CD4-positive, alpha-beta memory T cell (primary cell): ENCODE measurements at regions of chr2 and their contacts with region 1.

Region 1: GRCh38 chr2:3379647-3380534 is at the start of gene TRAPPC12:
- DNase-seq: peak; percentile 90 to 93 (median 92)
- H3K4me3 ChIP-seq: peak within 1 kb of the TSS; percentile 88 to 90
- H3K4me3 Mint-ChIP-seq: peak within 1 kb of the TSS; percentile 92 to 99 (median 95)
- H3K27ac ChIP-seq: peak within 1 kb of the TSS; percentile 89
- H3K27ac Mint-ChIP-seq: peak within 1 kb of the TSS; percentile 94 to 99 (median 98)
- H3K4me1 ChIP-seq: peaks cover 40% of the 10 kb centered on the region
- H3K4me1 Mint-ChIP-seq: peaks cover 32 to 64% (median 46%) of the 10 kb centered on the region in 4 donors
- H3K27me3 ChIP-seq: no peaks in the 10 kb centered on the region
- H3K27me3 Mint-ChIP-seq: no peaks in the 10 kb centered on the region
- total RNA-seq, gene TRAPPC12: 134 to 137 TPM

Region 2: DNA sequence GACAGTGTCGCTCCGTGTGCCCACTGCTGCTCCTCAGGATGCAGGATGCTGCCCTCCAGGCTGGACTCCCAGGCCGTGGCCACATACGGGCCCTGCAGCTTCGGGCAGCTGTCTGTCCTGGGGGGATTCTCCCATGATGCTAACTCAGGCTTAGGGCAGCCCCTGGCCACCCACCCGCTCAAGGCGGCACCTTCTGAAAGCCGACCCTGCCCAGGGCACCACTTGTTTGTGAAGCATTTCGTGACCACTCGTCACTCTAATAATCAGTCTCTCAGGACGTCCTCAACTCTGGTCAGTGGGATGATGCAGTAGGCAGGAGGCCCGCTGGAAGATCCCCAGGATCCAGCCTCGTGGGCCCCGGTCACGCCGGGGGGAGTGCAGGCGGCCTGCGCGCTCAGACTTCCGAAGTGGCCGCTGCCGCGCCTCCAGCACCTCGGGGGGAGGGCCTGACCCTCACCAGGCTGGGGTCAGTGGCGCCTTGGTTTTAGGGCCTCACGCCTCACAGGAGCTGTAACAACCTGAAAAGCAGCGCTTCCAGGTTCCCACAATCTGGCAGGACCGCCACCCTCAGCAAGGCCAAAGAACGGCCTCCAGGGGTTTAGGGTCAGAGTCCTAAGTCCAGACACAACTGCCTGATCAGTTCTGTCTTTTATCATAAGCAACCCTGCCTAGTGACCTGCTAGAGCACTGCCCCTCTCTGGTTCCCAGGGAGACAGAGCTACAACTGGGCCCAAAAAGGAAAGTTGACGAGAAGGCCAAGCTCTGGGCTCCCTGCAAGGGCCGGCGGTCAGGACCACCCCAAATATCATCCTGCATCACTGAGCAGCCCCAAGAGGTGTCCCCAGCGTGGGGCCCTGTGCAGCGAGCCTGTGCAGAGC is 55.2 kb before region 1 on chr2:
- CTCF ChIA-PET with region 1: no interaction called
- POLR2A ChIA-PET with region 1: no interaction called
- intact Hi-C with region 1: no loop called
- DNase-seq: no peak
- H3K4me3 ChIP-seq: no peak overlapping the region
- H3K4me3 Mint-ChIP-seq: no peak overlapping the region
- H3K27ac ChIP-seq: no peak overlapping the region
- H3K27ac Mint-ChIP-seq: no peak overlapping the region
- H3K4me1 ChIP-seq: no peaks in the 10 kb centered on the region
- H3K4me1 Mint-ChIP-seq: peaks cover 0 to 11% (median 6%) of the 10 kb centered on the region in 4 donors
- H3K27me3 ChIP-seq: no peaks in the 10 kb centered on the region
- H3K27me3 Mint-ChIP-seq: no peaks in the 10 kb centered on the region

Region 3: GRCh38 chr2:3396920-3397559 is 17.1 kb after region 1 on chr2:
- CTCF ChIA-PET with region 1: interaction called, 10 read pairs
- POLR2A ChIA-PET with region 1: interaction called, 4 read pairs
- intact Hi-C with region 1: no loop called
- DNase-seq: no peak
- H3K4me3 ChIP-seq: no peak overlapping the region
- H3K4me3 Mint-ChIP-seq: no peak overlapping the region
- H3K27ac ChIP-seq: no peak overlapping the region
- H3K27ac Mint-ChIP-seq: no peak overlapping the region
- H3K4me1 ChIP-seq: no peaks in the 10 kb centered on the region
- H3K4me1 Mint-ChIP-seq: peaks cover 9 to 40% (median 15%) of the 10 kb centered on the region in 4 donors
- H3K27me3 ChIP-seq: no peaks in the 10 kb centered on the region
- H3K27me3 Mint-ChIP-seq: no peaks in the 10 kb centered on the region

Region 4: GRCh38 chr2:3423492-3424175 is 43.7 kb after region 1 on chr2:
- CTCF ChIA-PET with region 1: interaction called, 22 read pairs
- POLR2A ChIA-PET with region 1: interaction called, 5 read pairs
- intact Hi-C with region 1: no loop called
- DNase-seq: peak; percentile 50 to 63 (median 57)
- H3K4me3 ChIP-seq: no peak overlapping the region
- H3K4me3 Mint-ChIP-seq: no peak overlapping the region
- H3K27ac ChIP-seq: no peak overlapping the region
- H3K27ac Mint-ChIP-seq: peak overlapping the region in 6 of 7 donors; percentile 9 to 90 (median 34)
- H3K4me1 ChIP-seq: no peaks in the 10 kb centered on the region
- H3K4me1 Mint-ChIP-seq: peaks cover 3 to 6% (median 5%) of the 10 kb centered on the region in 4 donors
- H3K27me3 ChIP-seq: no peaks in the 10 kb centered on the region
- H3K27me3 Mint-ChIP-seq: no peaks in the 10 kb centered on the region

Region 5: GRCh38 chr2:3518496-3519254 is 138.8 kb after region 1 on chr2:
- CTCF ChIA-PET with region 1: no interaction called
- POLR2A ChIA-PET with region 1: interaction called, 27 read pairs
- intact Hi-C with region 1: loop called (anchors 1 kb)
- DNase-seq: peak; percentile 97 to 99 (median 98)
- H3K4me3 ChIP-seq: peak overlapping the region; percentile 74 to 88
- H3K4me3 Mint-ChIP-seq: peak overlapping the region; percentile 80 to 97 (median 93)
- H3K27ac ChIP-seq: peak overlapping the region; percentile 92
- H3K27ac Mint-ChIP-seq: peak overlapping the region; percentile 79 to 98 (median 95)
- H3K4me1 ChIP-seq: peaks cover 23% of the 10 kb centered on the region
- H3K4me1 Mint-ChIP-seq: peaks cover 32 to 47% (median 38%) of the 10 kb centered on the region in 4 donors
- H3K27me3 ChIP-seq: no peaks in the 10 kb centered on the region
- H3K27me3 Mint-ChIP-seq: no peaks in the 10 kb centered on the region

Region 6: DNA sequence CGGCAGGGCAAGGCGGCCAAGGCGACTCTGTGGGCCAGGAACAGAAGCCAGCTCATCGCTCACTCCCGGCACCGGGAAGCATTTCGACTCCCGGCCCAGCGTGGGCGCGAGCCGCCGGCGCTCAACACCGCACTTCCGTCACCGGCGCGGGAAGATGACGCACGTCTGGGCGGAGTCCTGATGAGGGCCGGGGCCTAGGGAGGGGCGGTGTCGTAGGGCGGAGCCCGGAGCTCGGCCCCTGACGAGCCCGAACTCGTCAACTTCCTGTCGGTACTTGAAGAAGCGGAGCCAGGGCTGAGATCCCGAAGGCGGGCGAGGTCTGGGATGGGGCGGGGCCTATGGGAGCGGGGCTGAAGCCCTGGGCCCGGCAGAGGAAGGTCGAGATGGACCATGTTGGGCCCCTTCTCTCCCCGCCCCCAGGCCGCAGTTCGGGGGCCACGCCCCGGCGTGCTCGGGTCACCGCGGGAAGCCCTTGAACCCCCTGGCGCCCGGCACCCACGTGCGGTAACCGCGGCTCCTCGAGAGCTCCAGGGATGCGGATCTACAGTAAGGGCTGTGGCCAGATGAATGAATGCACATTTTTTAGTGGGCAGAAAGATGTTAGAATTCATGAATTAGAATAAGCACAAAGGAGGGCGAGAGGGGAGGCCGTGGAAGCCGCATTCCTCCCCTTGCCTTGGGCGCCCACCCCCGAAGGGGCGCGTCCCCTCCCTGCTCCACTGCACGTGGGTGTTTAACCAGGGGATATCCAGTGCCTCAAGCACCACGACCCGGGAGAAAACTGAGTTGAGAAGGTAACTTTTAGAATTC is 178.5 kb after region 1 on chr2 and contains the start of gene RNASEH1:
- CTCF ChIA-PET with region 1: no interaction called
- POLR2A ChIA-PET with region 1: interaction called, 33 read pairs
- intact Hi-C with region 1: loop called (anchors 1 kb)
- DNase-seq: peak; percentile 96 to 98 (median 96)
- H3K4me3 ChIP-seq: peak within 1 kb of the TSS; percentile 18 to 87
- H3K4me3 Mint-ChIP-seq: peak within 1 kb of the TSS; percentile 89 to 95 (median 91)
- H3K27ac ChIP-seq: peak within 1 kb of the TSS; percentile 90
- H3K27ac Mint-ChIP-seq: peak within 1 kb of the TSS; percentile 93 to 98 (median 97)
- H3K4me1 ChIP-seq: peaks cover 25% of the 10 kb centered on the region
- H3K4me1 Mint-ChIP-seq: peaks cover 4 to 34% (median 24%) of the 10 kb centered on the region in 4 donors
- H3K27me3 ChIP-seq: no peaks in the 10 kb centered on the region
- H3K27me3 Mint-ChIP-seq: no peaks in the 10 kb centered on the region
- total RNA-seq, gene RNASEH1: 22.0 to 24.0 TPM

Region 7: DNA sequence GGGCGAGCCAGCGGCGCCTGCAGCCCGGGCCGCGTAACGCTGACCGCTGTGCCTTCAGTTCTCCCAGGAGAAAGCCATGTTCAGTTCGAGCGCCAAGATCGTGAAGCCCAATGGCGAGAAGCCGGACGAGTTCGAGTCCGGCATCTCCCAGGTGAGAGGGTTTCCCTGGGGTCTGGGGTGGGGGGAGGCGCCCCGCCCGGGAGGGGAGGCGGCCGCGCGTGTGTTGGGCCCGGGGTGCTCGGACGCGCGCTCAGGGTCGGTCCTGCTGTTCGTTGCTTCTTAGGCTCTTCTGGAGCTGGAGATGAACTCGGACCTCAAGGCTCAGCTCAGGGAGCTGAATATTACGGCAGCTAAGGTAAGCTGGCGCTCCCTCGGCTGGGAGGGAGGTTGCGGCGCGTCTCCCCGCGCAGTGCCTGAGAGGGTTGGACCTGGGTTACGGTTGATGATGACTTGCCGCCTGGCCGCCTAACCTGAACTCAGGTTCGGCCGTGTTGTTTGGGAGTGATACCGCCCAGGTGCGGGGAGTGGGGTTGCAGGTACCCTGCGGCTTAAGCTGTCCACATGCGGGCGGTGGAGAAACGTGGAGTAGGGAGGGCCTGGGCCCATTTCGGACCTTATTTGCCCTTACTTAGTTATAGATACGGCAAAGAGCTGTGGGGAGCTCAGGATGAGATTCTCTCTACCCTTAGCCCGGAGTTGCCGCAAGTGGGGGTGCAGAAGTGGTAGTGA is 195.8 kb after region 1 on chr2:
- CTCF ChIA-PET with region 1: interaction called, 3 read pairs
- POLR2A ChIA-PET with region 1: interaction called, 9 read pairs
- intact Hi-C with region 1: loop called (anchors 1 kb)
- DNase-seq: peak; percentile 19 to 56 (median 49)
- H3K4me3 ChIP-seq: peak overlapping the region; percentile 65 to 67
- H3K4me3 Mint-ChIP-seq: peak overlapping the region; percentile 87 to 98 (median 92)
- H3K27ac ChIP-seq: peak overlapping the region; percentile 94
- H3K27ac Mint-ChIP-seq: peak overlapping the region; percentile 87 to 99 (median 97)
- H3K4me1 ChIP-seq: peaks cover 46% of the 10 kb centered on the region
- H3K4me1 Mint-ChIP-seq: peaks cover 33 to 49% (median 38%) of the 10 kb centered on the region in 4 donors
- H3K27me3 ChIP-seq: no peaks in the 10 kb centered on the region
- H3K27me3 Mint-ChIP-seq: no peaks in the 10 kb centered on the region